CD4-positive, alpha-beta memory T cell (primary cell): ENCODE measurements at regions of chr14 and their contacts with region 1.

Region 1: GRCh38 chr14:74905375-74906142 is 17.5 kb downstream of the RPS6KL1 start:
- DNase-seq: peak; percentile 63 to 77 (median 69)
- H3K4me3 ChIP-seq: no peak overlapping the region
- H3K4me3 Mint-ChIP-seq: no peak overlapping the region
- H3K27ac ChIP-seq: no peak overlapping the region
- H3K27ac Mint-ChIP-seq: peak overlapping the region; percentile 42 to 77 (median 67)
- H3K4me1 ChIP-seq: peaks cover 4% of the 10 kb centered on the region
- H3K4me1 Mint-ChIP-seq: peaks cover 0 to 15% (median 7%) of the 10 kb centered on the region in 4 donors
- H3K27me3 ChIP-seq: no peaks in the 10 kb centered on the region
- H3K27me3 Mint-ChIP-seq: no peaks in the 10 kb centered on the region

Region 2: GRCh38 chr14:74841230-74842207 is 64.0 kb before region 1 on chr14:
- CTCF ChIA-PET with region 1: interaction called, 13 read pairs
- POLR2A ChIA-PET with region 1: no interaction called
- intact Hi-C with region 1: no loop called
- DNase-seq: peak in 4 of 5 donors; percentile 16 to 31 (median 28)
- H3K4me3 ChIP-seq: peak overlapping the region in 1 of 2 donors; percentile 22
- H3K4me3 Mint-ChIP-seq: peak overlapping the region; percentile 35 to 73 (median 59)
- H3K27ac ChIP-seq: peak overlapping the region; percentile 14
- H3K27ac Mint-ChIP-seq: peak overlapping the region; percentile 85 to 96 (median 89)
- H3K4me1 ChIP-seq: peaks cover 59% of the 10 kb centered on the region
- H3K4me1 Mint-ChIP-seq: peaks cover 43 to 65% (median 53%) of the 10 kb centered on the region in 4 donors
- H3K27me3 ChIP-seq: no peaks in the 10 kb centered on the region
- H3K27me3 Mint-ChIP-seq: no peaks in the 10 kb centered on the region

Region 3: DNA sequence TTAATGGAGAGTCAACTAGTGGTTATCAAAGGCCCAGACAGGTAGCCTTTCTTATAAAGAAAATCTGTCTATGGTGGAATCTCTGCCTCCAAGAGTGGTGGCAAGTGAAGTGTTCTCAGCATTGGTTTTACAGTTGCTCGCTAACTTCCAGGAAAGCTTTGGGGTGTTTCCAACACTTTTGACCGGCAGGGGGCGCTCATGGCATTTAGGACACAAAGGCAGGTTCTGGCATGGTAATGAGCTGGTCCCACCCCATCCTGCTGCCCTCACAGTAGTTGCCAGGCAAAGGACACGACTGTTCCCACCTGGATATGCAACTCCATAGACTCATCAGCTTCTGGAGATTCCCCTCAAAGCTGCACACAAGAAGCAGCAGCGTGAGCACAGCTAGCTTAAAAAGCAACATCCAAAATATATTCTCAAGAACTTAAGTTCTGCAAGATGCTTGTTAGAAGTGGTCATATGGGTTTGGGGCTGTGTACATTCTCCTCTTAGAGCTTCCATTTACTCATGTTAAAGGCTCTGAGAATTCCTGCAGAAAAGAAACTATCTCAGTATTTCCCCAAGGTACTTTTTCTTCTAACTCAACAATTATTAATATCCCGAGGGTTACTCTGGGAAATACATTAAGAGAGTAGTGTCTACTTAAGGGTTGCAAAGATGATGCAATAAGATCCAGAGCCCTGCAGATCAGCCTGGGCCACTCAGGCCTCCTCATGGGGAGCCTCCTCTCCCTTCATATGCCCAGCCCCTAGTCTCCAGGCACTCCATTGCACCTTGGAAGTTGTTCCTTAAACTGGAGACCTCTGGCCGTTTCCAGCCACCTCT is 44.4 kb before region 1 on chr14:
- CTCF ChIA-PET with region 1: interaction called, 677 read pairs
- POLR2A ChIA-PET with region 1: interaction called, 70 read pairs
- intact Hi-C with region 1: loop called (anchors 1 kb)
- DNase-seq: peak; percentile 79 to 85 (median 85)
- H3K4me3 ChIP-seq: no peak overlapping the region
- H3K4me3 Mint-ChIP-seq: no peak overlapping the region
- H3K27ac ChIP-seq: no peak overlapping the region
- H3K27ac Mint-ChIP-seq: peak overlapping the region in 1 of 7 donors; percentile 25
- H3K4me1 ChIP-seq: peaks cover 6% of the 10 kb centered on the region
- H3K4me1 Mint-ChIP-seq: peaks cover 3 to 9% (median 4%) of the 10 kb centered on the region in 4 donors
- H3K27me3 ChIP-seq: no peaks in the 10 kb centered on the region
- H3K27me3 Mint-ChIP-seq: no peaks in the 10 kb centered on the region

Region 4: DNA sequence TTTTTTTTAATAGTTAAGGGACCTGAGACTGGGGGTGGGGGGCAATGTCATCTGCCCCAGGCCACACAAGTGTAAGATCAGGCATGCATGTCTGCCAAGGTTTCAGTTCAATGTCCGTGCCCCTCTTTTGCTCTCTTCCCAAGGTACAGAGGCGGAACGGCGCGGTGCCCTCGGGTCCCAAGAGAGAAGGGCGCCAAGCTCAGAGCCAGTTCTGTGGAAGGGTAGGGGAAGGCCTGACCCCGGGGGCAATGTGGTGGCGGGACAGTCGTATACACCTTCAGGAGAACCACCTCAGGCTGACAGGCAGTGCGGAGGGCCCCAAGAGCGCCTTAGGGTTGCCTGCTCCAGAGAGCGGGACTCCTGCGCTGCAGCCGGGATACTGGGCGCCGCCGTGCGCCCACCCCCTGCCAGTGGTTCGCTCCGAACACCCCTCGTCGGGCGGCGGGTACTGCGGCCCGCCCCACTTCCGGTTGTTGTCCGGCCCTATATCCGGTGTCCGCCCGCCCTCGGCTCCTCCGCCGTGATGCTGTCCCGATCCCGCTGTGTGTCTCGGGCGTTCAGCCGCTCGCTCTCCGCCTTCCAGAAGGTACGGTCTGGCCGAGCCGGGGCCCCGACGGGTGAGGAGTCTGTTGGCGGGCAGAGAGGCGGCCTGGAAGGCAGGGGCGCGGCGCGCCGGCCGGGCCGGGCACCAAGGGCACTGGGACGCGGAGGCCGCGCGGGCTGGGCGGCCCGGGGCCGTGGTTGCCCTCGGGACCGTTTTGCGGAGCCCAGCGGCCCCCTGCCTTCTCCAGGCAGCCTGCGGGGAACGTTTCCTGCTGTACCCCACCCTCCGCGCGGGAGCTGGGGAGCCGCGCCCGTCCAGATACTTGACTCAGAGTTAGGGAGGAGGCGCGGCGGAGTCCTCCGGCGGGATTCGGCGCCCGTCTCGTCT is 23.9 kb before region 1 on chr14 and contains the start of gene DLST:
- CTCF ChIA-PET with region 1: interaction called, 139 read pairs
- POLR2A ChIA-PET with region 1: interaction called, 11 read pairs
- intact Hi-C with region 1: no loop called
- DNase-seq: peak; percentile 82 to 87 (median 83)
- H3K4me3 ChIP-seq: peak within 1 kb of the TSS; percentile 44 to 98
- H3K4me3 Mint-ChIP-seq: peak within 1 kb of the TSS; percentile 96 to 100 (median 99)
- H3K27ac ChIP-seq: peak within 1 kb of the TSS; percentile 87
- H3K27ac Mint-ChIP-seq: peak within 1 kb of the TSS; percentile 93 to 100 (median 100)
- H3K4me1 ChIP-seq: peaks cover 53% of the 10 kb centered on the region
- H3K4me1 Mint-ChIP-seq: peaks cover 48 to 75% (median 62%) of the 10 kb centered on the region in 4 donors
- H3K27me3 ChIP-seq: no peaks in the 10 kb centered on the region
- H3K27me3 Mint-ChIP-seq: no peaks in the 10 kb centered on the region
- total RNA-seq, gene DLST: 101 to 104 TPM

Region 5: DNA sequence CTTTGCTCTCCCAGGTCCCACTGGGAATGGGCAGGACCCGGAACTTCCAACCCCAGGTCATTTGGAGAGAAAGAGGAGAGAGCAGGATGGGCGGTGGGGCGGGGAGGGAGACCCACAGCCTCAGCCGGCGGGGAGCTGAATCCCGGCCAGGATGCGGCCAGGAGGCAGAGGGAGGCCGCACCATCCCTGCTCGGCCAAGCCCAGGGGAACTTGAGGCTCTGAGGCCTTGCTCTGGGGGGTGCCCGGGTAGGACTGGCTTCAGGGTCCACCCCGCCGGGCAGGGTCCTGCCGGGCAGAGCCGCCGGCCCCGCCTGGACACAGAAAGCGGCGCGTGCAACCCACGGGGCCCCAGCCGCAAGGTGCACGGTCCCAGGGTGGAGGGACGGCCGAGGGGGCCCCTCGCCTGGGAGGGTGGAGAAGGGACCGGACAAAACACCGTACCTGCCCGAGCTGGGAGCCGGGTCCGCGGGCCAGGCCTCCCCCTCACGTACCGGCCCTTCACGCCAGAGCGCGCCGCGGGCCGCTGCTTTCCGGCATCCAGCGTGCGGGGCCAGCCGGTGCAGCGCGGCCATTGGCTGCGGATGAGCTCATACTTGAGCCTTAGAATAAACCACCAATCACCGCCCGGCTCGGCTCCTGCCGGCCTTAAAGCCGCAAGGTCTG is 17.3 kb after region 1 on chr14 and contains the start of gene RPS6KL1:
- CTCF ChIA-PET with region 1: interaction called, 20 read pairs
- POLR2A ChIA-PET with region 1: no interaction called
- intact Hi-C with region 1: no loop called
- DNase-seq: peak; percentile 56 to 76 (median 61)
- H3K4me3 ChIP-seq: peak within 1 kb of the TSS in 1 of 2 donors; percentile 35
- H3K4me3 Mint-ChIP-seq: peak within 1 kb of the TSS; percentile 46 to 72 (median 62)
- H3K27ac ChIP-seq: no peak within 1 kb of the TSS
- H3K27ac Mint-ChIP-seq: peak within 1 kb of the TSS in 4 of 7 donors; percentile 59 to 74 (median 66)
- H3K4me1 ChIP-seq: no peaks in the 10 kb centered on the region
- H3K4me1 Mint-ChIP-seq: peaks cover 3 to 8% (median 5%) of the 10 kb centered on the region in 4 donors
- H3K27me3 ChIP-seq: no peaks in the 10 kb centered on the region
- H3K27me3 Mint-ChIP-seq: peaks cover 3 to 10% of the 10 kb centered on the region in 2 donors
- total RNA-seq, gene RPS6KL1: 2.5 to 2.9 TPM

Region 6: GRCh38 chr14:75088574-75089373 is 183.2 kb after region 1 on chr14:
- CTCF ChIA-PET with region 1: interaction called, 41 read pairs
- POLR2A ChIA-PET with region 1: no interaction called
- intact Hi-C with region 1: no loop called
- DNase-seq: peak; percentile 37 to 48 (median 46)
- H3K4me3 ChIP-seq: no peak overlapping the region
- H3K4me3 Mint-ChIP-seq: no peak overlapping the region
- H3K27ac ChIP-seq: no peak overlapping the region
- H3K27ac Mint-ChIP-seq: peak overlapping the region in 1 of 7 donors; percentile 47
- H3K4me1 ChIP-seq: no peaks in the 10 kb centered on the region
- H3K4me1 Mint-ChIP-seq: no peaks in the 10 kb centered on the region
- H3K27me3 ChIP-seq: no peaks in the 10 kb centered on the region
- H3K27me3 Mint-ChIP-seq: no peaks in the 10 kb centered on the region

Region 7: GRCh38 chr14:75278422-75279161 is 373.0 kb after region 1 on chr14 and contains the start of gene FOS:
- CTCF ChIA-PET with region 1: no interaction called
- POLR2A ChIA-PET with region 1: no interaction called
- intact Hi-C with region 1: no loop called
- DNase-seq: peak; percentile 97 to 99 (median 98)
- H3K4me3 ChIP-seq: peak within 1 kb of the TSS; percentile 89 to 95
- H3K4me3 Mint-ChIP-seq: peak within 1 kb of the TSS; percentile 90 to 98 (median 94)
- H3K27ac ChIP-seq: peak within 1 kb of the TSS; percentile 75
- H3K27ac Mint-ChIP-seq: peak within 1 kb of the TSS; percentile 98 to 100 (median 99)
- H3K4me1 ChIP-seq: peaks cover 56% of the 10 kb centered on the region
- H3K4me1 Mint-ChIP-seq: peaks cover 41 to 88% (median 53%) of the 10 kb centered on the region in 4 donors
- H3K27me3 ChIP-seq: peaks cover 6% of the 10 kb centered on the region
- H3K27me3 Mint-ChIP-seq: peaks cover 0 to 24% of the 10 kb centered on the region in 2 donors
- total RNA-seq, gene FOS: 4.1 to 4.3 TPM